Right ventricle myocardium inferior (tissue), 1 donor: ENCODE measurements at regions of chr11 and their contacts with region 1.

Region 1: GRCh38 chr11:93537767-93538261 is 5.4 kb downstream of the SMCO4 start:
- DNase-seq: no peak
- ATAC-seq: peak; percentile 15

Region 2: GRCh38 chr11:93567401-93567895 is 29.6 kb after region 1 on chr11:
- intact Hi-C with region 1: loop called (anchors 2 kb)
- DNase-seq: peak; percentile 82
- ATAC-seq: peak; percentile 94